Activated CD4-positive, alpha-beta T cell treated with anti-CD3 and anti-CD28 coated beads for 36 hours (primary cell): ENCODE measurements at regions of chr16 and their contacts with region 1.

Region 1: DNA sequence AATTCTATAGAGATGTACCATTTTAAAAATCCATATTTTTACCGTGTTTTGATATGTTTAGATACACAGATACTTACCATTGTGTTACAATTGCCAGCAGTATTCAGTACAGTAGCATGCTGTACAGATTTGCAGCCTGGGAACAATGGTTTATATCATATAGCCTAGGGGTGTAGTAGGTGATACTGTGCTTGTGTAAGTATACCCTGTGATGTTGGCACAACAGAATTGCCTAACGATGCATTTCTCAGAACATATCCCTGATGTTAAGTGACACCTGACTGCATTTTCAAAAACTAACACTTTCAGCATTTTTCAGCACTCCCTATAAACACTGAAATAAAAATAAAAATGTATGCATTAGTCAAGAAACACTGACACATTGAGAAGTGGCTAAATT is 144.8 kb upstream of the CNTNAP4 start:
- DNase-seq: no peak
- ATAC-seq: no peak
- H3K4me3 Mint-ChIP-seq: no peak overlapping the region
- H3K27ac Mint-ChIP-seq: no peak overlapping the region
- H3K4me1 Mint-ChIP-seq: no peaks in the 10 kb centered on the region
- H3K27me3 Mint-ChIP-seq: no peaks in the 10 kb centered on the region

Region 2: GRCh38 chr16:76081967-76082366 is 50.4 kb before region 1 on chr16:
- CTCF ChIA-PET with region 1: no interaction called
- POLR2A ChIA-PET with region 1: no interaction called
- intact Hi-C with region 1: loop called in 1 of 2 experiments (anchors 10 kb)
- DNase-seq: no peak
- ATAC-seq: no peak
- H3K4me3 Mint-ChIP-seq: no peak overlapping the region
- H3K27ac Mint-ChIP-seq: no peak overlapping the region
- H3K4me1 Mint-ChIP-seq: no peaks in the 10 kb centered on the region
- H3K27me3 Mint-ChIP-seq: no peaks in the 10 kb centered on the region

Region 3: DNA sequence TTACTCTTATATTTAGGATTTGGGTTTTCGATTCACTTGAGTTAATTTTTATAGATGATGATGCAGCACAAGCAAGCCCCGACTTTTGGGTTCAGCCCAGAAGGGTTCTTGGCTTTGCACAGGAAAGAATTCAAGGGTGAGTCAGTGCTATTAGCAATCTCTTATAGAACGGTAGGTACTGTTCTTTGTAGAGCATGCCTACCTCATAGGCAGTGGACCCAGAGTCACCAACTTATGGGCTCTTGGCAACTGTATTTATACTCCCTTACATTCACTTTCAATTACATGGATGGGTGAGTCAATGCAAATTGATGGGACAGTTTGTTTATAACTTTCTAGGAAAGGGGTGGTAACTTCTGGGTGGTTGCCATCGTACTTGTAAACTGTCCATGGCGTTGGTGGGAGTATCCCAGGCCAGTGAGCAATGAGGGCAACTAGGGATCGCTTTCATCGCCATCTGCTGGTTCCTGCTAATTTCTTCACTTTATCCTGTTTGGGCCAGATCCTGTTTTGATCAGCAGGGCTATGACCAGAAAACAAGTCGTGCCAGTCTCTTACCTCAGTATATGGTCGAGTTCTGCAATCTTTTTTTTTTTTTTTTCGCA is 507.4 kb after region 1 on chr16:
- CTCF ChIA-PET with region 1: no interaction called
- POLR2A ChIA-PET with region 1: no interaction called
- intact Hi-C with region 1: no loop called
- DNase-seq: peak; percentile 9
- ATAC-seq: no peak
- H3K4me3 Mint-ChIP-seq: no peak overlapping the region
- H3K27ac Mint-ChIP-seq: no peak overlapping the region
- H3K4me1 Mint-ChIP-seq: no peaks in the 10 kb centered on the region
- H3K27me3 Mint-ChIP-seq: no peaks in the 10 kb centered on the region

Region 4: GRCh38 chr16:78116946-78117345 is 1984.5 kb after region 1 on chr16:
- CTCF ChIA-PET with region 1: no interaction called
- POLR2A ChIA-PET with region 1: no interaction called
- intact Hi-C with region 1: no loop called
- DNase-seq: no peak
- ATAC-seq: no peak
- H3K4me3 Mint-ChIP-seq: no peak overlapping the region
- H3K27ac Mint-ChIP-seq: no peak overlapping the region
- H3K4me1 Mint-ChIP-seq: no peaks in the 10 kb centered on the region
- H3K27me3 Mint-ChIP-seq: no peaks in the 10 kb centered on the region